ENCODE measurements at regions of chr1 and their contacts with region 1.

Region 1: GRCh38 chr1:225977937-225978748 is 21.0 kb downstream of the SDE2 start:
- DNase-seq: no peak
- H3K4me3 ChIP-seq: no peak overlapping the region
- H3K27ac ChIP-seq: no peak overlapping the region
- H3K4me1 ChIP-seq: no peaks in the 10 kb centered on the region
- H3K27me3 ChIP-seq: no peaks in the 10 kb centered on the region
- CTCF ChIP-seq: no peak

Region 2: GRCh38 chr1:225480825-225481434 is 497.2 kb before region 1 on chr1:
- CTCF ChIA-PET with region 1: no interaction called
- dilution Hi-C with region 1: loop called (anchors 25 kb)
- in situ Hi-C with region 1: loop called (anchors 5 kb)
- intact Hi-C with region 1: no loop called
- DNase-seq: peak; percentile 28
- H3K4me3 ChIP-seq: no peak overlapping the region
- H3K27ac ChIP-seq: no peak overlapping the region
- H3K4me1 ChIP-seq: no peaks in the 10 kb centered on the region
- H3K27me3 ChIP-seq: no peaks in the 10 kb centered on the region
- CTCF ChIP-seq: peak; percentile 93 to 95

Region 3: GRCh38 chr1:225652729-225653462 is 325.2 kb before region 1 on chr1 and contains the start of gene ENAH:
- CTCF ChIA-PET with region 1: no interaction called
- dilution Hi-C with region 1: no loop called
- in situ Hi-C with region 1: no loop called
- intact Hi-C with region 1: loop called (anchors 10 kb)
- DNase-seq: peak; percentile 76
- H3K4me3 ChIP-seq: peak within 1 kb of the TSS; percentile 81 to 99 (median 89)
- H3K27ac ChIP-seq: peak within 1 kb of the TSS; percentile 83
- H3K4me1 ChIP-seq: peaks cover 33% of the 10 kb centered on the region
- H3K27me3 ChIP-seq: no peaks in the 10 kb centered on the region
- CTCF ChIP-seq: no peak
- total RNA-seq, gene ENAH: 109 to 117 TPM

Region 4: DNA sequence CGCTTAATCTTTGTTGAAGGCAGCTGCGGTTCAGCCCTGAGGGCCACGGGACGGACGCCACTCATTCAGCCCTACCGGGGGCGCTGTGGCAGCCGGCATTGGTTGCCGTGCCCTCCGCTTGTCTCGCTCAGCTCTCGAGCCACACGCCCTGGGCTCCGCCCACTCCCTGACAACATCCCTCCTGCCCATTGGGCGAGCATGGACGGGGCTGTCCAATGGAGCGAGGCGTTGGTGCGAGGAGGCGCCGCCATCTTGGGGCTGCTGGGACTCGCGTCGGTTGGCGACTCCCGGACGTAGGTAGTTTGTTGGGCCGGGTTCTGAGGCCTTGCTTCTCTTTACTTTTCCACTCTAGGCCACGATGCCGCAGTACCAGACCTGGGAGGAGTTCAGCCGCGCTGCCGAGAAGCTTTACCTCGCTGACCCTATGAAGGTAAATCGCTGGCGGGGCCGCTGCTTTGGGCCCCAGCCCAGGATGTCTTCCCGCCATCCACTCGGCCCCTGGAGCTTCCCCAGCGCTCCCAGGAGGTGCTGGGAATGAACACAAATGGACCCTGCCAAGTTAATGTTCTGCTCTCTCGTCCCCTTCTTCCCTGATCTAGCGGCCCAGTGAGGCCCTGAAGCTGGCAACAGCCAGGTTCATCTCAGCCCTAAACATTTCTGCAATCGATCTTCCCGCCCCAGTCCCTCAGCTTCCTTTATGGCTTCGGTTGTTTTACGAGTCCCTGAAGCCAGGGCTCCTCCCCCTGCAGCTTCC is 200.4 kb before region 1 on chr1 and contains the start of gene SRP9:
- CTCF ChIA-PET with region 1: no interaction called
- dilution Hi-C with region 1: no loop called
- in situ Hi-C with region 1: loop called in 1 of 2 experiments (anchors 10 kb)
- intact Hi-C with region 1: loop called (anchors 1 kb)
- DNase-seq: peak; percentile 99
- H3K4me3 ChIP-seq: peak within 1 kb of the TSS; percentile 74 to 99 (median 77)
- H3K27ac ChIP-seq: peak within 1 kb of the TSS; percentile 92
- H3K4me1 ChIP-seq: peaks cover 25% of the 10 kb centered on the region
- H3K27me3 ChIP-seq: no peaks in the 10 kb centered on the region
- CTCF ChIP-seq: peak; percentile 78 to 94
- total RNA-seq, gene SRP9: 164 to 214 TPM

Region 5: GRCh38 chr1:225875044-225875814 is 102.9 kb before region 1 on chr1:
- CTCF ChIA-PET with region 1: no interaction called
- dilution Hi-C with region 1: loop called (anchors 5 kb)
- in situ Hi-C with region 1: no loop called
- intact Hi-C with region 1: loop called (anchors 2 kb)
- DNase-seq: peak; percentile 82
- H3K4me3 ChIP-seq: no peak overlapping the region
- H3K27ac ChIP-seq: no peak overlapping the region
- H3K4me1 ChIP-seq: peaks cover 27% of the 10 kb centered on the region
- H3K27me3 ChIP-seq: no peaks in the 10 kb centered on the region
- CTCF ChIP-seq: no peak

Region 6: GRCh38 chr1:225923692-225924555 is 54.2 kb before region 1 on chr1 and contains the start of gene PYCR2:
- CTCF ChIA-PET with region 1: no interaction called
- dilution Hi-C with region 1: loop called (anchors 5 kb)
- in situ Hi-C with region 1: no loop called
- intact Hi-C with region 1: loop called (anchors 5 kb)
- DNase-seq: peak; percentile 94
- H3K4me3 ChIP-seq: peak within 1 kb of the TSS; percentile 69 to 97 (median 75)
- H3K27ac ChIP-seq: peak within 1 kb of the TSS; percentile 69
- H3K4me1 ChIP-seq: peaks cover 40% of the 10 kb centered on the region
- H3K27me3 ChIP-seq: no peaks in the 10 kb centered on the region
- CTCF ChIP-seq: no peak
- total RNA-seq, gene PYCR2: 64.2 to 73.1 TPM